PC-9 (cell line): ENCODE measurements at regions of chr1 and their contacts with region 1.

Region 1: GRCh38 chr1:186680245-186681061 is at the start of gene PTGS2:
- DNase-seq: peak; percentile 65 to 84
- H3K4me3 ChIP-seq: peak within 1 kb of the TSS; percentile 57
- H3K27ac ChIP-seq: no peak within 1 kb of the TSS
- H3K4me1 ChIP-seq: no peaks in the 10 kb centered on the region; the same call in 1 of the 2 replicates
- H3K27me3 ChIP-seq: no peaks in the 10 kb centered on the region
- CTCF ChIP-seq: no peak; the same call in 1 of the 2 replicates
- total RNA-seq, gene PTGS2: 0.63 and 2.3 TPM in 2 replicates

Region 2: DNA sequence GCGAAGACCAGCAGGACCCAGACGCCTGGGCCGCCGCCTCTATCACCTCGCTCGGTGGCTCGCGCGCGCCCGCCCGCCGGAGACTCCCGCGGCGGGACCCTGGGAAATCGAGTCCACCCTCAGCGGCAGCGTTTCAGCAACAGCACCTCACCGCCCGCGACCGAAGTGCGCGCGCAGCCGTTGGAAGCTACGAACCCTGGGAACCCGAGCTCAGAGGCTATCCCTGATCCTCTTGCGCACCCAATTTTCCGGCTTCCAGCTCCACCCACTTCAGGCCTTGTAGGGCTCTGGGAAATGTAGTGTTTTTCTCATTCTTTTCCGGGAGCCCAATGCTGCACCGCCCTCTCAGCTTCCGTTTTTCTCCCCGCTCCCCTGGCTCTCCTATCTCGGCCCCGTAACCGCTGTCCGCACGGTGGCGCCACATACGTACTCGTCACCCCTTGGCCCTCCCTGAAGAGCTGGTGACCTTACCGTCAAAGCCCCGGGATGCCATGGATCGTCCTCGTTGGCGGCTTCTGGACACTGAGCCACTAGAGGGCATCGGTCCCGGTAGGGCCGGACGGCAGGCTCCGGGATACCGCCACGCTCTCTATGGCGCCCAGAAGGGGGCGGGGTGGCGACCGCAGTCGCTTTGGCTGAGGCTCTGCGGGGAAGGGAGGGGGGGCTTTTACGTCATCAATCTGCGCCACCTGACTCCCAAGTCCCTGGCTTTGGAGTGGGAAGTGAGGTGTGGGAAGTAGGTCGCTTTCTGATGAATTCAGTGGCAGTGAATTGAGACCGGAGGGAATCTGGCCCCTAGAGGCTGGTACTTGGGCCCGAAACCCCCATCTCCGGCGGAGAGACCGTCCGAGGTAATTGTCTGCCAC is 305.1 kb before region 1 on chr1 and contains the starts of genes ODR4 and TPR:
- CTCF ChIA-PET with region 1: interaction called, 5 read pairs
- POLR2A ChIA-PET with region 1: interaction called, 5 read pairs
- intact Hi-C with region 1: loop called (anchors 1 kb)
- DNase-seq: peak; percentile 96 to 98
- H3K4me3 ChIP-seq: peak within 1 kb of the TSS; percentile 92
- H3K27ac ChIP-seq: peak within 1 kb of the TSS; percentile 93
- H3K4me1 ChIP-seq: peaks cover 25% of the 10 kb centered on the region; the same call in 1 of the 2 replicates
- H3K27me3 ChIP-seq: no peaks in the 10 kb centered on the region
- CTCF ChIP-seq: peak; percentile 91
- total RNA-seq, gene ODR4: 13.7 and 19.6 TPM in 2 replicates
- total RNA-seq, gene TPR: 104 and 123 TPM in 2 replicates

Region 3: DNA sequence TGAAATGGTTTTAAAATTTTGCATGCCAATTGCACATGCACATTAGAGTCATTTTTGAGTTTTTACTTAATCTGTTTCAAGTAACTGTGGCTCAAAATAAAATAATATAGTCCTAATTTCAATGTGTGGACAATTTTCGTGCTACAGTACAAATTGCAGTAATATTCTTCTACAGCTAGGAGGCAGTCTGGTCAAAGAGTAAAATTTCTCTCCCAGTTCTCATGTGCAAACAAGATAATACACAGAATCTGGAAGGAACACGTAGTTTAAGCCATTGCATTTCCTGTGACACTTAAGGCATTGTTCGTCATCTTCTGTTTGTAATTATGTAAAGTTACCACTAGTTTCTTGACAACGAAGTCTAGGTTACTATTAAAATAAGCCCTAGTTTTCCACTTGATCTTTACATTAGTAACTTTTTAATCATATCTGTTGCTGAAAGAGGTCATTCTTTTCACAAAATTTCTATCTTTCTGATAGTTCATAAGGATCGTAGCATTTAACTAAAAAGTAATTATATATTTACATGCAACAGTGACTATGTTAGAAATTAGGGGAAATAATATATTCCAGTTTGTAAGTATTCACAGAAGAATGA is 275.9 kb before region 1 on chr1:
- CTCF ChIA-PET with region 1: no interaction called
- POLR2A ChIA-PET with region 1: no interaction called
- intact Hi-C with region 1: loop called (anchors 10 kb)
- DNase-seq: peak in 1 of 2 experiments; percentile 2
- H3K4me3 ChIP-seq: no peak overlapping the region
- H3K27ac ChIP-seq: no peak overlapping the region
- H3K4me1 ChIP-seq: no peaks in the 10 kb centered on the region
- H3K27me3 ChIP-seq: no peaks in the 10 kb centered on the region
- CTCF ChIP-seq: peak; percentile 75

Region 4: DNA sequence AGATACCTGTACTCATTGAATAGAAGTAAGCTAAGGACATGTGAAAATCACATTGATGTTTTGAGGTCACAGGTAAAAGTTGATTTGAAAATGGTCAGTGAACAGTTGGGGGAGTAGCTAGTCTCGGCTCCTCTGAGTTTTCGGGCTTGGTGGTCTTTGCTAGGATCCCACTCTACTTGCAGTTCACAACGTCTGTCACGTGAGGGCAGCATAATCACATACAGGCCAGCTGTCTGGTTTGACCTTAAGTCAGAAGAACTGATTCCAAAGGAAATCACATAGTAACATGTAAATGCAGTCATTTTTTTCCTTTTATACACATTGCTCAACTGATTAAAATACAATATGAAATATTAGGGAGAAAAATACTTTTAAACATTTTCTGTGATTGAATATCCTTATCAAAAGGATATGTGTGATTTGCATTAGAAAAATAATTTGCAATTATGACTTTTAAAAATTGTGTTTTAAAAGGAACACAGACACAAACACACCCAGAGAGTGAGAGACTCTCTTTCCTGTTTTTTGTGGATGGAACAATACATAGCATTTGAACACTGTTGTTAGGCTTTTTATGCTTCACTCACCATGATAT is 197.7 kb before region 1 on chr1:
- CTCF ChIA-PET with region 1: no interaction called
- POLR2A ChIA-PET with region 1: interaction called, 3 read pairs
- intact Hi-C with region 1: loop called (anchors 1 kb)
- DNase-seq: peak; percentile 45 to 59
- H3K4me3 ChIP-seq: no peak overlapping the region
- H3K27ac ChIP-seq: no peak overlapping the region
- H3K4me1 ChIP-seq: no peaks in the 10 kb centered on the region
- H3K27me3 ChIP-seq: no peaks in the 10 kb centered on the region
- CTCF ChIP-seq: peak; percentile 93

Region 5: DNA sequence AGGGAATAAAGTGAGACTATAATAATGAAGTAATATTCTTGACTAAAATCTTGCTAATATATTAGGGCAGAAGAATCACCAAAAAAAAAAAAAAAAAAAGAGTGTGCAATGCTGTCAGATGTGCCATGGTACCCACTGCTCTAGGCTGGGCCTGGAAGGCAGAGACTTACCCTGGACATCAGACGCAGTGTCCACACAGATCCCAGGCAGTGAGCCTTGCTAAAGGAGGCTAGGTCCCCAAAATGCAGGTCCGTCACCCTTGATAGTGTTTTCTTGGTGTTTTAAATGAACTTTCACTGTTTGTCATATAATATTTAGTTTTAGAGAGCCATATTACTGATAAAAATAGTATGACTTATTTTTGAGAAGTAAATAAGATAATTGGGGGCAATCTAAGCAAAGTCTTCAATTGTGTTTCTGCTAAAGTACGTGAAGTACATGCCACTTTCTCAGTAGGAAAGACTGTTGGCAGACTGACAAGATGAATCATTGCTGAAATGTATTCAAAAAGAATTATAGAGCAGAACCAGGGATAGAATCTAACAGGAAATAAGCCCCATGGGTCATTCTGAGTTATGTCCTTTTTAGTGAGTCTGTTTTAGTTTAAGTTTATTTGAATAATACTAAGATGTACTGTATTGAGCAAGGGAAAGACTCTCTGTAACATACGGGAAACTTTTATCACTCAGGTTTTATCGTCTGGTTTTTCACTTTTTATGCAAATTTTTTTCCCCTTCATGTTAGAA is 144.9 kb before region 1 on chr1:
- CTCF ChIA-PET with region 1: no interaction called
- POLR2A ChIA-PET with region 1: interaction called, 10 read pairs
- intact Hi-C with region 1: no loop called
- DNase-seq: no peak
- H3K4me3 ChIP-seq: no peak overlapping the region
- H3K27ac ChIP-seq: no peak overlapping the region
- H3K4me1 ChIP-seq: no peaks in the 10 kb centered on the region
- H3K27me3 ChIP-seq: no peaks in the 10 kb centered on the region
- CTCF ChIP-seq: no peak

Region 6: GRCh38 chr1:186605762-186606350 is 74.6 kb before region 1 on chr1:
- CTCF ChIA-PET with region 1: interaction called, 3 read pairs
- POLR2A ChIA-PET with region 1: no interaction called
- intact Hi-C with region 1: loop called (anchors 2 kb)
- DNase-seq: peak in 1 of 2 experiments; percentile 37
- H3K4me3 ChIP-seq: no peak overlapping the region
- H3K27ac ChIP-seq: no peak overlapping the region
- H3K4me1 ChIP-seq: no peaks in the 10 kb centered on the region
- H3K27me3 ChIP-seq: no peaks in the 10 kb centered on the region
- CTCF ChIP-seq: peak; percentile 72